H1 (cell line): ENCODE measurements at regions of chr11 and their contacts with region 1.

Region 1: GRCh38 chr11:12377824-12378593 is 638 bp downstream of the PARVA start:
- DNase-seq: peak; percentile 69 to 86
- H3K4me3 ChIP-seq: peak overlapping the region; percentile 72 to 98 (median 83)
- H3K27ac ChIP-seq: peak overlapping the region; percentile 83
- H3K4me1 ChIP-seq: peaks cover 0 to 6% (median 2%) of the 10 kb centered on the region in 4 experiments; a peak in 3 of 7 replicates
- H3K27me3 ChIP-seq: peaks cover 2 to 12% (median 8%) of the 10 kb centered on the region in 4 experiments
- CTCF ChIP-seq: peak; percentile 2 to 47 (median 19)
- EP300 ChIP-seq: no peak
- POLR2A ChIP-seq: peak; percentile 67 to 68
- RAD21 ChIP-seq: peak; percentile 25 to 43; a peak in 3 of 4 replicates

Region 2: DNA sequence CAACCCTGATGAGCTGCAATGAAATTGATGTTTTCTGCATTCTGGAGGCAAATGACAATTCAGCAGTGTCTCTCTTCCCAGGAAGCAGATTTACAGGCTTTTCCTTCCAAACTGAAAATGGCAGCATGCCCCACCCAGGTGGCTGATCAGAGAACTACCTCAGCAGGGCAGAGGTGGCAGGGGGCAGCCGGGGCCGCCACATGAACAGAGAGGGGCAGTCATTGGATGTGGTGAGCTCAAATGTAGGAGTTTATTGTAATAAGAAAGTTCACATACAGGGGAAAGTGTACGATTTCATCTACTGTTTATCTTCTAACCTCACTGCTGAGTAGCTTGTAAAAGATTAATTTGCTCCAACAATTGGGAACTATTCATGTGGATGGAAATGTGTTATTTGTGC is 16.3 kb before region 1 on chr11:
- CTCF ChIA-PET with region 1: interaction called, 18 read pairs
- POLR2A ChIA-PET with region 1: interaction called, 31 read pairs
- DNase-seq: no peak
- H3K4me3 ChIP-seq: no peak overlapping the region
- H3K27ac ChIP-seq: no peak overlapping the region
- H3K4me1 ChIP-seq: peaks cover 0 to 4% (median 3%) of the 10 kb centered on the region in 4 experiments; a peak in 3 of 7 replicates
- H3K27me3 ChIP-seq: no peaks in the 10 kb centered on the region
- CTCF ChIP-seq: no peak
- EP300 ChIP-seq: no peak
- POLR2A ChIP-seq: no peak
- RAD21 ChIP-seq: peak in 1 of 2 experiments; percentile 26; a peak in 2 of 4 replicates

Region 3: DNA sequence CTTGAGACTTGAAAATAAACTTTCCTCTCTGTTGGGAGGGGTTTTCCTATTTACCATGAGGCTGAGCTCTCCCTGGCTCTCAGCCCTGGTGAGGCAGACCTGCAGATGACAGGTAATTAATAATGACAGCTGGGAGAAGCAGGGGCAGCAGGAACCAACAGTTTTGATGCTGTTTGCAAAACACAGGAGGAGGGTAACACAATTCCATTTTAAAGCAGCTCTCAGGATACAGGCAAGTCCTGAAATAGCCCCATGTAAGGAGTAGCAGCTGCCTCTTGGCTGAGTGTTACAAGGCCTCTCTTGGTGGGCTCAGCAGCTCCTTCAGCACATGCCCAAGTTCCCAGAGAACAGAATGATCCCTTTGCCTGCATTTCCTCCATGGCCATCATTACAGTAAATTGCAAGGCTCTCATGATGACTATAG is 12.7 kb after region 1 on chr11:
- CTCF ChIA-PET with region 1: interaction called, 7 read pairs
- POLR2A ChIA-PET with region 1: interaction called, 11 read pairs
- DNase-seq: no peak
- H3K4me3 ChIP-seq: no peak overlapping the region
- H3K27ac ChIP-seq: no peak overlapping the region
- H3K4me1 ChIP-seq: no peaks in the 10 kb centered on the region
- H3K27me3 ChIP-seq: no peaks in the 10 kb centered on the region
- CTCF ChIP-seq: no peak
- EP300 ChIP-seq: no peak
- POLR2A ChIP-seq: no peak
- RAD21 ChIP-seq: no peak